Right lobe of liver (tissue), 6 donors: ENCODE measurements at regions of chr1 and their contacts with region 1.

Region 1: GRCh38 chr1:36285448-36286101 is 20.6 kb upstream of the SH3D21 start:
- DNase-seq: peak in 1 of 3 donors; percentile 70
- ATAC-seq: peak; percentile 89 to 94 (median 90)
- H3K4me3 ChIP-seq: no peak overlapping the region
- H3K27ac ChIP-seq: no peak overlapping the region
- H3K4me1 ChIP-seq: peaks cover 0 to 9% (median 4%) of the 10 kb centered on the region in 4 donors
- H3K27me3 ChIP-seq: no peaks in the 10 kb centered on the region
- CTCF ChIP-seq: peak; percentile 74 to 77 (median 76)
- POLR2A ChIP-seq: no peak

Region 2: GRCh38 chr1:36239941-36240637 is 45.5 kb before region 1 on chr1:
- intact Hi-C with region 1: loop called (anchors 10 kb)
- DNase-seq: peak in 2 of 3 donors; percentile 66 to 75
- ATAC-seq: peak; percentile 64 to 88 (median 80)
- H3K4me3 ChIP-seq: no peak overlapping the region
- H3K27ac ChIP-seq: peak overlapping the region in 1 of 3 donors; percentile 42
- H3K4me1 ChIP-seq: peaks cover 0 to 42% (median 15%) of the 10 kb centered on the region in 4 donors
- H3K27me3 ChIP-seq: no peaks in the 10 kb centered on the region
- CTCF ChIP-seq: no peak
- POLR2A ChIP-seq: no peak